PC-9 (cell line): ENCODE measurements at regions of chr12 and their contacts with region 1.

Region 1: GRCh38 chr12:38892090-38892786 is 13.2 kb downstream of the CPNE8 start:
- DNase-seq: no peak
- H3K4me3 ChIP-seq: no peak overlapping the region
- H3K27ac ChIP-seq: no peak overlapping the region
- H3K4me1 ChIP-seq: no peaks in the 10 kb centered on the region
- H3K27me3 ChIP-seq: no peaks in the 10 kb centered on the region
- CTCF ChIP-seq: no peak

Region 2: DNA sequence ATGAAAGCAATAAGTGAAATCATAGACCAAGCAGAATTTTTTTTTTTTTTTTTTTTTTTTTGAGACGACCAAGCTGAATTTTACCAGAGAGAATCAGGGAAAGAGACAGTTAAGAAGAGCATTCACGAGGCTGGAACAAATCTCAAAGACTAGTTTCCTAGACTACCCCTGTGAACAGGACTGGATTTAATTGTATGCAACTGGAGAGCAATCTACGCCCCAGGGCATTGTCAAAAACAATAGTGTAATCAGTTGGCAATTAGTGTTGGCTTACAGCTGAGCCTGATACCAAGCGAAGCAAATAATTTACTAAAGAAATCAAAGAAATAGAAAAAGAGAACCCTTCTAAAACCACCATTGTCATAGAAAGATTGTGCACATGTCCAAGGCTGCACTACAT is 246.0 kb after region 1 on chr12:
- CTCF ChIA-PET with region 1: interaction called, 20 read pairs
- POLR2A ChIA-PET with region 1: no interaction called
- intact Hi-C with region 1: no loop called
- DNase-seq: no peak
- H3K4me3 ChIP-seq: no peak overlapping the region
- H3K27ac ChIP-seq: no peak overlapping the region
- H3K4me1 ChIP-seq: no peaks in the 10 kb centered on the region
- H3K27me3 ChIP-seq: no peaks in the 10 kb centered on the region
- CTCF ChIP-seq: no peak